A549 (cell line): ENCODE measurements at regions of chr20 and their contacts with region 1.

Region 1: GRCh38 chr20:645318-646106 is 7.5 kb downstream of the SRXN1 start:
- DNase-seq: peak; percentile 87 to 91
- ATAC-seq: peak; percentile 57 to 79
- H3K4me3 ChIP-seq: no peak overlapping the region
- H3K27ac ChIP-seq: peak overlapping the region in 1 of 2 experiments; percentile 50; a peak in 2 of 6 replicates
- H3K4me1 ChIP-seq: peaks cover 25% of the 10 kb centered on the region
- CTCF ChIP-seq: peak; percentile 97
- EP300 ChIP-seq: no peak
- POLR2A ChIP-seq: no peak
- RAD21 ChIP-seq: peak; percentile 73 to 78

Region 2: GRCh38 chr20:528923-529604 is 116.4 kb before region 1 on chr20:
- CTCF ChIA-PET with region 1: no interaction called
- POLR2A ChIA-PET with region 1: no interaction called
- DNase-seq: peak; percentile 58 to 65
- ATAC-seq: peak; percentile 75 to 96
- H3K4me3 ChIP-seq: no peak overlapping the region
- H3K27ac ChIP-seq: peak overlapping the region; percentile 82
- H3K4me1 ChIP-seq: peaks cover 59% of the 10 kb centered on the region
- CTCF ChIP-seq: no peak
- EP300 ChIP-seq: peak; percentile 46 to 50; a peak in 2 of 5 replicates
- POLR2A ChIP-seq: no peak
- RAD21 ChIP-seq: no peak

Region 3: DNA sequence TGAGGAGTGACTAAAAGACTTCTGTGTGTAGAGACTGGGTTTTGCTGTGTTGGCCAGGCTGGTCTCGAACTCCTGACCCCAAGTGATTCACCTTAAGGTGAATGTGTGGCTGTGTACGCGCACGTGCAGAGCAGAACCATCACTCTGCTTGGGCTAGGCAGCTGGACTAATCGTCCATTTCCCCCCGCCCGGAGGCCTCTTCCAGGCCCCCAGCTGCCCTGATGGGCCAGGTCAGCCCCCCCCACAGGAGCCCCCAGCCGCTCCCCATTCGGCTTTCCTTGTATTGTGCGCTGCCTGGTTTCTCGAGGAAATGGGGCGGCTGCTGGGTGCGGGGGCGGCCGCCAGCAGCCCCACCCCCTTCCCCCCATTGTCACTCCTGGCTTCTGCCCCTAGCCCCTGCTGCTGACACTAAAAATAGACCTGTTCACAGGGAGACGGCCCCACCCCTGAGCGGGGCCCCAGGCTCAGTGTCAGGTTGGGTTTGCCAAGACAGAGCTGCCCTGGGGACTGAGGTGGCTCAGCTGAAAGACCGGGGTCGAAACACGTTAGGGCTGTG is 77.3 kb before region 1 on chr20:
- CTCF ChIA-PET with region 1: interaction called, 87 read pairs
- POLR2A ChIA-PET with region 1: interaction called, 3 read pairs
- DNase-seq: no peak
- ATAC-seq: no peak
- H3K4me3 ChIP-seq: no peak overlapping the region
- H3K27ac ChIP-seq: no peak overlapping the region
- H3K4me1 ChIP-seq: peaks cover 6% of the 10 kb centered on the region; the same call in 2 of the 3 replicates
- CTCF ChIP-seq: no peak
- EP300 ChIP-seq: no peak
- POLR2A ChIP-seq: no peak
- RAD21 ChIP-seq: no peak

Region 4: DNA sequence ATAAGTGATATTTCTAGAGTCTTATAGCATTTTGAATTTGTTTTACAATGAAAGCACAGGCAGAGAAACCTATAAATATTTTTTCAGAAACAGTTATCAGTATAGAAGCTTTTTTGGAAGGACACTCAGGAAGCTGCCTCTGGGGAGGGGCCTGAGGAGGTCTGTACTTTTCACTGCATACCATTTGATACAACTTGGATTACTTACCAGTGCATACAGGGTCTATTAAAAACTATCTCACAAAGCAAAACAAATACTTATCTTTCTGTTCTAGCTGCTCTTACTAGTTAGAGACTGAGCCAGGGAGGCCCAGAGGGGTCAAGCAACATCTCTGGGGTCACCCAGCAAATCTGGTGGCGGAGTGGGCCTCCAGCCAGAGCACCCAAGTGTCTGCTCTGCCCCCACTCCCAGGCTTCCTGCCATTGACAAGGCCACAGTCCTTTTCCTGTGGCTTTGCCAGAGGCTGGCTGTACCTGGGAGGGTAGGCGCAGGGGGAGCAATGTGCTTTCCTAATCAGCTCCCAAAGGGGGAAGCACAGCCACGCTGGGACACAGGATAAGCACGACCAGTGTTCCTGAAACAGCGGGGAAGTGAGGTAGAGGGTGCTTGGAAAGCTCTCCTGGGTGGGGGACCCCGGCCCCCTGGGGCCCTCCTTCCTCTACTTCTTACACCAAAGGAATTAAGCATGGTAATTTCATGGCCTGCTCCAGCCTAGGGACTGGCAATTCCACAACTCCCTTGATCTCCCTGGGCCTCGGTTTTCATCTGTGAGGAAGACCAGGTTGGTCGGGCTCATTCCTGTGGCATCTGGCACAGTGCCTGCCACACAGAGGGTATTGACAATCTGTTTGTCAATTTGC is 43.2 kb before region 1 on chr20:
- CTCF ChIA-PET with region 1: interaction called, 13 read pairs
- POLR2A ChIA-PET with region 1: no interaction called
- DNase-seq: no peak
- ATAC-seq: no peak; a peak in 1 of 6 replicates
- H3K4me3 ChIP-seq: no peak overlapping the region
- H3K27ac ChIP-seq: no peak overlapping the region
- H3K4me1 ChIP-seq: no peaks in the 10 kb centered on the region
- CTCF ChIP-seq: no peak
- EP300 ChIP-seq: no peak
- POLR2A ChIP-seq: no peak
- RAD21 ChIP-seq: no peak

Region 5: DNA sequence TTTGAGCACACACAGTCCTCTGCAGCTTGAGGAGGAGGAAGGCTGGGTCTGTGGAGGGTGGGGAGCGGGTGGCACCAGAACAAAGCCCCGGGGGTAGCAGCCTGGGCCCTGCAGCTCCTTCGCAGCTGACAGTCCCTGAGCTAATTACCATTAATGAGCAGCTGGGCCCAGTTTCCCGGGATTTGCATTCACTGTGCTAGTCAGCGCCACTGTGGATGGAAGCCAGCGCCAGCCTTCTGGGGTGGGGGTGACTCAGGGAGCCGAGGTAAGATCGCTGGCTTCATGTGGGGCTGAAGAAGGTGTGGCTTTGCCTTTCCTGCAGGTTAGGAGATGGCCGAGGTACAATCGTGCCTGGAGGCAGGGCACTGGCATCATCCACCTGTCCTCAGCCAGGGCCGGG is 11.0 kb before region 1 on chr20:
- CTCF ChIA-PET with region 1: interaction called, 39 read pairs
- POLR2A ChIA-PET with region 1: no interaction called
- DNase-seq: no peak
- ATAC-seq: no peak
- H3K4me3 ChIP-seq: no peak overlapping the region
- H3K27ac ChIP-seq: no peak overlapping the region
- H3K4me1 ChIP-seq: peaks cover 4% of the 10 kb centered on the region; the same call in 1 of the 3 replicates
- CTCF ChIP-seq: no peak
- EP300 ChIP-seq: no peak
- POLR2A ChIP-seq: no peak
- RAD21 ChIP-seq: no peak

Region 6: GRCh38 chr20:667391-667964 is 22.0 kb after region 1 on chr20:
- CTCF ChIA-PET with region 1: interaction called, 50 read pairs
- POLR2A ChIA-PET with region 1: interaction called, 3 read pairs
- DNase-seq: peak; percentile 69 to 80
- ATAC-seq: peak in 1 of 2 experiments; percentile 78; a peak in 3 of 6 replicates
- H3K4me3 ChIP-seq: no peak overlapping the region
- H3K27ac ChIP-seq: 0 out of 6 replicates have a peak overlapping the region, but pooled peaks of 1 of the 2 experiments have one; percentile 6
- H3K4me1 ChIP-seq: peaks cover 28% of the 10 kb centered on the region; the same call in 2 of the 3 replicates
- CTCF ChIP-seq: peak; percentile 90
- EP300 ChIP-seq: no peak
- POLR2A ChIP-seq: no peak
- RAD21 ChIP-seq: peak; percentile 57 to 71

Region 7: DNA sequence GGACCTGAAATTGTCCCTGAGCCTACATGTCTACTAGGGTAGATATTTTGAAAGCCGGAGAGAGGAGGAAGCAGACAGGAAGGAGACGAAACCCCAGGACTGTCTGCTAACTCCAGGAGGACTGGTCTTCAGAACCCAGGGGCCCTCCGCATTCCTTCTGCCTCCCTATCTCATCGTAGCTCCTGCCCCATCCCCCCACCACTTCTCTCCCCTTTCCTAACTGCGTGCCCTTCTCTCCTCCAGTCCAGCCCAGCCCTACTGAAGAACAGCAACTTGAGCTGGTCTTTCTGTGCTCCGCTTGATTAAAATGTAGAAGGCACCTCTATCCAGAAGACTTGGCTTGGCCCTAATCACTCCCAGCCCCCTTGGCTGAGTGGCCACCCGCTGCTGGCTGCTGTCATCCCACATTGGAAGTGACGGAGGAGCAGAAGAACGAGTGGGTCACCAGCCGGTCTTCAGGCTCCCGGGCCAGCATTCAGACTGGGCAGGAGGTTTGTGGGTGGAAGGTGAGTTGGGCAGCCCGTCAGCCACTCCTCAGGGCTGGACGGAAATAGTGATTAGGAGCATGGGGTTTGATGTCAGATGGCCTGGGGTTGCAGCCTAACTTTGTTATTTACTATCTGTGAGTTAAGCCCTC is 299.4 kb after region 1 on chr20:
- CTCF ChIA-PET with region 1: no interaction called
- POLR2A ChIA-PET with region 1: no interaction called
- DNase-seq: no peak
- ATAC-seq: no peak
- H3K4me3 ChIP-seq: no peak overlapping the region
- H3K27ac ChIP-seq: no peak overlapping the region
- H3K4me1 ChIP-seq: no peaks in the 10 kb centered on the region
- CTCF ChIP-seq: no peak
- EP300 ChIP-seq: no peak
- POLR2A ChIP-seq: no peak
- RAD21 ChIP-seq: no peak